ENCODE measurements at regions of chr13 and their contacts with region 1.

Region 1: GRCh38 chr13:67238277-67238859 is 8.2 kb upstream of the PCDH9 start:
- DNase-seq: peak in 1 of 2 experiments; percentile 33
- H3K4me3 ChIP-seq: no peak overlapping the region
- H3K4me3 Mint-ChIP-seq: no peak overlapping the region
- H3K27ac Mint-ChIP-seq: no peak overlapping the region
- H3K4me1 ChIP-seq: no peaks in the 10 kb centered on the region
- H3K4me1 Mint-ChIP-seq: no peaks in the 10 kb centered on the region
- H3K27me3 ChIP-seq: no peaks in the 10 kb centered on the region
- H3K27me3 Mint-ChIP-seq: no peaks in the 10 kb centered on the region
- CTCF ChIP-seq: peak; percentile 48 to 55

Region 2: GRCh38 chr13:65656740-65657329 is 1581.5 kb before region 1 on chr13:
- CTCF ChIA-PET with region 1: no interaction called
- POLR2A ChIA-PET with region 1: no interaction called
- intact Hi-C with region 1: loop called (anchors 5 kb)
- DNase-seq: no peak
- H3K4me3 ChIP-seq: no peak overlapping the region
- H3K4me3 Mint-ChIP-seq: no peak overlapping the region
- H3K27ac Mint-ChIP-seq: no peak overlapping the region
- H3K4me1 ChIP-seq: no peaks in the 10 kb centered on the region
- H3K4me1 Mint-ChIP-seq: no peaks in the 10 kb centered on the region
- H3K27me3 ChIP-seq: no peaks in the 10 kb centered on the region
- H3K27me3 Mint-ChIP-seq: peaks cover under 1% of the 10 kb centered on the region
- CTCF ChIP-seq: peak; percentile 23 to 41

Region 3: DNA sequence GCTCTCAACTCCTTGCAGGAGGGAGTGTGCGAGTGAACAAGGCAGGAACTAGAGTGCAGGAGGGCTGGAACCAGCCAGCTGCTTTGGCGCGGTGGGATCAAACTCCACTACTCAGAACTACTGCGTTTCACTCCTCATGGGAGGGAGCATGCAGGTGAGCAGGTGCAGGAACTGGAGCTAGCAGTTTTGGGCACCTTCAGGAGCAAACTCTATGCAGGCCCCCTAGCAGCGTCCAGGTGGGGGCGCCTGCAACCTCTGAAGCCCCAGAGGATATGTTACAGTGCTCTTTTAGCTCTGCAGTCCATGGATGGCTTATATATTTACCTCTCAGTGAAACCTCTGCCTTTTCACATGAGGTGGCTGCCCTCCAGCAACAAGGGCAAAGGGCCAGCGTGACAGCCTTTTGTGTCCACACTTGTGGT is 1311.6 kb before region 1 on chr13:
- CTCF ChIA-PET with region 1: interaction called, 3 read pairs
- POLR2A ChIA-PET with region 1: no interaction called
- intact Hi-C with region 1: loop called (anchors 2 kb)
- DNase-seq: peak; percentile 38 to 41
- H3K4me3 ChIP-seq: no peak overlapping the region
- H3K4me3 Mint-ChIP-seq: no peak overlapping the region
- H3K27ac Mint-ChIP-seq: no peak overlapping the region
- H3K4me1 ChIP-seq: no peaks in the 10 kb centered on the region
- H3K4me1 Mint-ChIP-seq: no peaks in the 10 kb centered on the region
- H3K27me3 ChIP-seq: no peaks in the 10 kb centered on the region
- H3K27me3 Mint-ChIP-seq: peaks cover 7% of the 10 kb centered on the region
- CTCF ChIP-seq: peak in 1 of 2 experiments; percentile 54

Region 4: DNA sequence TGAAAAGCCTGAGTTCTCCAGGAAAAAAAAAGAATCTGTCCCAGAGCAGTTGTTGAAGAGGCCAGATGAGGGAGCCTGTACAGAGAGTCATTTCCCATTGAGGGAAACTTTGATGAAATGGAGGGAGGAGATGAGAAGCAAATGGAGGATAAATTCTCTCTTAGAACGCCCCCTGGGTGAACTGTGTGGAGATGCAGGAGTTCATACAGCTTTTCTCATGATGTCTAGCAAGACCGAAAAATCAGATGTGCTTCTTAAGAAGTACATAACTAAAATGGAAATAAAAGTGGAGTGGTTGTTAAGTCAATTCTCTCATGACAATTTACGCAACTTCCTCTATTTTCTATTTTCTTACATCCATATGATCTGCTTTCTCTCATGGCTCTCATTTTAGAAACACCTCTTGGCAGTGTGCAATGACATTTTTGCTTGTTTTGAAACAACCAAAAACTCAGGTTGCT is 1271.3 kb before region 1 on chr13:
- CTCF ChIA-PET with region 1: no interaction called
- POLR2A ChIA-PET with region 1: no interaction called
- intact Hi-C with region 1: loop called (anchors 5 kb)
- DNase-seq: peak; percentile 45 to 63
- H3K4me3 ChIP-seq: no peak overlapping the region
- H3K4me3 Mint-ChIP-seq: no peak overlapping the region
- H3K27ac Mint-ChIP-seq: no peak overlapping the region
- H3K4me1 ChIP-seq: no peaks in the 10 kb centered on the region
- H3K4me1 Mint-ChIP-seq: no peaks in the 10 kb centered on the region
- H3K27me3 ChIP-seq: no peaks in the 10 kb centered on the region
- H3K27me3 Mint-ChIP-seq: no peaks in the 10 kb centered on the region
- CTCF ChIP-seq: peak; percentile 37 to 46

Region 5: DNA sequence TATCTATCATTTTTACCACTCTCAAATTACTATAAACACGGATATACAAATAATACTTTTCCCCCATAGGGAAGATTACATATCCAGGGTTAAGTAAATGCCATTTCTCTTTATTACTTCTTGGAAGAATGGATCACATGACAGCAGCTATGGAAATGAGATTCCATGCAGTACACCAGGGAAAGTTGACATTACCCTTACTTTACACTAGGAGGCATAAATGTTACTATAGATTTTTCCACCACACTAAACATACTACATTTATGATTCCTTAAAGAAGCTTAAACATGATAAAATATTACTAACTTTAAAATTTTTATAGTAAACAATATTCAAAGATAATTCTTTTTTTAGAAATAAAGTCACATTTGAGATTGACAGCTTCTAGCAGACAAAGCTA is 619.7 kb before region 1 on chr13:
- CTCF ChIA-PET with region 1: interaction called, 4 read pairs
- POLR2A ChIA-PET with region 1: no interaction called
- intact Hi-C with region 1: loop called (anchors 2 kb)
- DNase-seq: no peak
- H3K4me3 ChIP-seq: no peak overlapping the region
- H3K4me3 Mint-ChIP-seq: no peak overlapping the region
- H3K27ac Mint-ChIP-seq: no peak overlapping the region
- H3K4me1 ChIP-seq: no peaks in the 10 kb centered on the region
- H3K4me1 Mint-ChIP-seq: no peaks in the 10 kb centered on the region
- H3K27me3 ChIP-seq: no peaks in the 10 kb centered on the region
- H3K27me3 Mint-ChIP-seq: no peaks in the 10 kb centered on the region
- CTCF ChIP-seq: peak; percentile 37

Region 6: GRCh38 chr13:67100723-67101122 is 137.6 kb before region 1 on chr13:
- CTCF ChIA-PET with region 1: no interaction called
- POLR2A ChIA-PET with region 1: no interaction called
- intact Hi-C with region 1: no loop called
- DNase-seq: peak; percentile 42 to 58
- H3K4me3 ChIP-seq: no peak overlapping the region
- H3K4me3 Mint-ChIP-seq: peak overlapping the region; percentile 75
- H3K27ac Mint-ChIP-seq: peak overlapping the region; percentile 87
- H3K4me1 ChIP-seq: peaks cover 18% of the 10 kb centered on the region; the same call in 1 of the 2 replicates
- H3K4me1 Mint-ChIP-seq: peaks cover 13% of the 10 kb centered on the region
- H3K27me3 ChIP-seq: no peaks in the 10 kb centered on the region
- H3K27me3 Mint-ChIP-seq: no peaks in the 10 kb centered on the region
- CTCF ChIP-seq: no peak

Region 7: DNA sequence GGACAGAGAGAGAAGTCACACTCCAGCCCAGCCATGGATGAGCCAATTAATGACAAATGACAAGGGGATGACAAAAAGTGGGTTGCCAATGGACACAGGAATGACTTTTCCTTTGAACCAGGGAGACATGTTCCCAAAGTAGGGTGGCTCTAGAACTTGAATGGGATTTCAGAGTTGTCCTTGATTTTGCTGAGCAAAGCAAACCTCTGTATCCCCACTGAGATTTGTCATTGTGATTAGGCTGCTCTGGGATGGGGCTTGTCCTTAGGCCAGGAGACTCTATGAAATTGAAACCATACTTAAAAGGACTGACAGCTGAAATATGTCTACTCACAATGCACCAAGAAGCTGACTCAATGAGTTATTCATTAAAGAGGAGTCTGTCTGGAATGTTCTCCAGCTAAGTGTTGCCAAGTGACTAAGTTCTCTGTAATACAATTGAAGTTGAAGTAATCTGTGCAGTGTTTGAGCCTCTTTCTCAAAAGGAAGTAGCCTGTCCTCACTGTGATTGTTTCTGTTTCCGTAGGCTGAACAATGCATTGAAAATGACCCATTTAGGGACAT is 60.8 kb after region 1 on chr13:
- CTCF ChIA-PET with region 1: no interaction called
- POLR2A ChIA-PET with region 1: no interaction called
- intact Hi-C with region 1: no loop called
- DNase-seq: no peak
- H3K4me3 ChIP-seq: no peak overlapping the region
- H3K4me3 Mint-ChIP-seq: no peak overlapping the region
- H3K27ac Mint-ChIP-seq: no peak overlapping the region
- H3K4me1 ChIP-seq: no peaks in the 10 kb centered on the region
- H3K4me1 Mint-ChIP-seq: no peaks in the 10 kb centered on the region
- H3K27me3 ChIP-seq: no peaks in the 10 kb centered on the region
- H3K27me3 Mint-ChIP-seq: no peaks in the 10 kb centered on the region
- CTCF ChIP-seq: no peak